IMR-90 (cell line): ENCODE measurements at regions of chr3 and their contacts with region 1.

Region 1: GRCh38 chr3:129673882-129674797 is 67.7 kb upstream of the PLXND1 start:
- DNase-seq: no peak
- ATAC-seq: no peak
- H3K4me3 ChIP-seq: no peak overlapping the region
- H3K27ac ChIP-seq: no peak overlapping the region
- H3K4me1 ChIP-seq: no peaks in the 10 kb centered on the region
- H3K27me3 ChIP-seq: no peaks in the 10 kb centered on the region
- CTCF ChIP-seq: no peak
- POLR2A ChIP-seq: no peak
- RAD21 ChIP-seq: no peak

Region 2: DNA sequence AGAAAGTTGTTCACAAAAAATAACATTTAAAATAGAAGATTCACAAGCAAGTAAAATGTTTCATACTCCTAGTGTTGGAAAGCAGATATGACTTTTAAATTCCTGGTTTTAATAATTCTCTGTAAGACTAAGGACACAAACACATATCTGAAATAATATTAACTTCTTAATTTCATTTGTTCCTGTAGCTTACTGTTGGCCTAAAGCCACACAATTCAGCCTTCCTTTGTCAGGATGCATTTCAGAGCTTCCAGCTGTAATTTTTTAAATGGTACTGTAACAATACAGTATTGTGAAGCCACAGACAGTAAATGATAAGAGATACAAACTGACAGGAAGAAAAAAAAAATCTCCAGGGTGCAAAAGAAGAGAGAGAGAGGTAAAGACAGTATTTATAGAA is 135.2 kb after region 1 on chr3:
- CTCF ChIA-PET with region 1: no interaction called
- POLR2A ChIA-PET with region 1: no interaction called
- dilution Hi-C with region 1: no loop called
- in situ Hi-C with region 1: no loop called
- intact Hi-C with region 1: no loop called
- DNase-seq: no peak
- ATAC-seq: no peak
- H3K4me3 ChIP-seq: no peak overlapping the region
- H3K27ac ChIP-seq: no peak overlapping the region
- H3K4me1 ChIP-seq: no peaks in the 10 kb centered on the region
- H3K27me3 ChIP-seq: no peaks in the 10 kb centered on the region
- CTCF ChIP-seq: no peak
- POLR2A ChIP-seq: no peak
- RAD21 ChIP-seq: no peak

Region 3: GRCh38 chr3:129992781-129993180 is 318.6 kb after region 1 on chr3:
- CTCF ChIA-PET with region 1: no interaction called
- POLR2A ChIA-PET with region 1: interaction called, 14 read pairs
- dilution Hi-C with region 1: no loop called
- in situ Hi-C with region 1: no loop called
- intact Hi-C with region 1: no loop called
- DNase-seq: no peak
- ATAC-seq: peak; percentile 92
- H3K4me3 ChIP-seq: no peak overlapping the region
- H3K27ac ChIP-seq: no peak overlapping the region
- H3K4me1 ChIP-seq: no peaks in the 10 kb centered on the region
- H3K27me3 ChIP-seq: peaks cover 58% of the 10 kb centered on the region
- CTCF ChIP-seq: peak; percentile 37
- POLR2A ChIP-seq: no peak
- RAD21 ChIP-seq: no peak